ENCODE measurements at regions of chr12 and their contacts with region 1.

Region 1: GRCh38 chr12:32444895-32445294 is 45.5 kb downstream of the FGD4 start:
- DNase-seq: peak; percentile 19 to 68 (median 44)
- ATAC-seq: peak; percentile 80
- H3K4me3 ChIP-seq: no peak overlapping the region
- H3K27ac ChIP-seq: peak overlapping the region in 1 of 4 donors; percentile 44
- H3K4me1 ChIP-seq: peaks cover 33% of the 10 kb centered on the region
- H3K27me3 ChIP-seq: no peaks in the 10 kb centered on the region
- CTCF ChIP-seq: no peak
- POLR2A ChIP-seq: no peak

Region 2: GRCh38 chr12:32365473-32366064 is 79.3 kb before region 1 on chr12:
- intact Hi-C with region 1: loop called (anchors 10 kb)
- DNase-seq: peak; percentile 64 to 72 (median 68)
- ATAC-seq: peak; percentile 82
- H3K4me3 ChIP-seq: no peak overlapping the region
- H3K27ac ChIP-seq: no peak overlapping the region
- H3K4me1 ChIP-seq: peaks cover 14% of the 10 kb centered on the region
- H3K27me3 ChIP-seq: no peaks in the 10 kb centered on the region
- CTCF ChIP-seq: peak; percentile 39 to 90 (median 84)
- POLR2A ChIP-seq: no peak